HCT116 (cell line): ENCODE measurements at regions of chr10 and their contacts with region 1.

Region 1: GRCh38 chr10:103542764-103543616 is 49.5 kb downstream of the NEURL1 start:
- DNase-seq: peak; percentile 46
- ATAC-seq: peak; percentile 81
- H3K4me3 ChIP-seq: peak overlapping the region; percentile 29 to 39
- H3K27ac ChIP-seq: no peak overlapping the region
- H3K4me1 ChIP-seq: peaks cover 8 to 35% of the 10 kb centered on the region in 2 experiments; a peak in 3 of 4 replicates
- H3K27me3 ChIP-seq: no peaks in the 10 kb centered on the region
- CTCF ChIP-seq: peak; percentile 76 to 84 (median 84)
- POLR2A ChIP-seq: no peak
- RAD21 ChIP-seq: no peak

Region 2: GRCh38 chr10:103416436-103417147 is 126.4 kb before region 1 on chr10:
- CTCF ChIA-PET with region 1: no interaction called
- POLR2A ChIA-PET with region 1: no interaction called
- RAD21 ChIA-PET with region 1: no interaction called
- intact Hi-C with region 1: loop called (anchors 1 kb)
- DNase-seq: peak; percentile 58
- ATAC-seq: peak; percentile 80
- H3K4me3 ChIP-seq: no peak overlapping the region
- H3K27ac ChIP-seq: no peak overlapping the region
- H3K4me1 ChIP-seq: no peaks in the 10 kb centered on the region
- H3K27me3 ChIP-seq: no peaks in the 10 kb centered on the region
- CTCF ChIP-seq: peak; percentile 57 to 93 (median 77)
- POLR2A ChIP-seq: no peak
- RAD21 ChIP-seq: peak; percentile 92

Region 3: GRCh38 chr10:103491493-103492381 is 51.3 kb before region 1 on chr10:
- CTCF ChIA-PET with region 1: interaction called, 8 read pairs
- POLR2A ChIA-PET with region 1: no interaction called
- RAD21 ChIA-PET with region 1: no interaction called
- intact Hi-C with region 1: loop called (anchors 2 kb)
- DNase-seq: peak; percentile 44
- ATAC-seq: peak; percentile 85
- H3K4me3 ChIP-seq: no peak overlapping the region
- H3K27ac ChIP-seq: no peak overlapping the region
- H3K4me1 ChIP-seq: peaks cover 15 to 28% of the 10 kb centered on the region in 2 experiments
- H3K27me3 ChIP-seq: no peaks in the 10 kb centered on the region
- CTCF ChIP-seq: no peak
- POLR2A ChIP-seq: no peak
- RAD21 ChIP-seq: no peak

Region 4: DNA sequence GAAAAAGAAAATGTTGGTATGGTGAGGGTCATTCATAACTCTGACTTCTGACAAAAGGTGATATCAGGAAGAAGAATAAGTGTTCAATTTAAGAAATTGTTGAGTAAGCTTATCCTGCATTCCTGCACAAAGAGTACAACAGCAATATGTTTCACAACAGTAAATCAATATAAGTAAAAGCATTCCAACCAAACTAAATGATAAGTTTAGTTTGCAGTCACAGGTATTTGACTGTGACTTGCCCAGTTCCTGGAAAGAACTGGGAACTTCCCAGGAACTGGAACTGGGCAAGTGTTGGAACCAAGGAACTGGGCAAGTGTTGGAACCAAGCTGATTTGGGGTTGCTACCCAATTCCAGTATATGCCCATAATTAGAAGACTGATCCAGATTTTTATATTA is 14.4 kb before region 1 on chr10:
- CTCF ChIA-PET with region 1: interaction called, 14 read pairs
- POLR2A ChIA-PET with region 1: interaction called, 12 read pairs
- RAD21 ChIA-PET with region 1: no interaction called
- intact Hi-C with region 1: no loop called
- DNase-seq: no peak
- ATAC-seq: no peak
- H3K4me3 ChIP-seq: no peak overlapping the region
- H3K27ac ChIP-seq: no peak overlapping the region
- H3K4me1 ChIP-seq: peaks cover 10 to 45% of the 10 kb centered on the region in 2 experiments
- H3K27me3 ChIP-seq: no peaks in the 10 kb centered on the region
- CTCF ChIP-seq: no peak
- POLR2A ChIP-seq: no peak
- RAD21 ChIP-seq: no peak

Region 5: GRCh38 chr10:103564776-103565520 is 22.0 kb after region 1 on chr10:
- CTCF ChIA-PET with region 1: interaction called, 19 read pairs
- POLR2A ChIA-PET with region 1: no interaction called
- RAD21 ChIA-PET with region 1: no interaction called
- intact Hi-C with region 1: no loop called
- DNase-seq: peak; percentile 42
- ATAC-seq: peak; percentile 97
- H3K4me3 ChIP-seq: no peak overlapping the region
- H3K27ac ChIP-seq: no peak overlapping the region
- H3K4me1 ChIP-seq: peaks cover 0 to 15% of the 10 kb centered on the region in 2 experiments; a peak in 1 of 4 replicates
- H3K27me3 ChIP-seq: peaks cover 4% of the 10 kb centered on the region; the same call in 1 of the 2 replicates
- CTCF ChIP-seq: peak; percentile 79 to 100 (median 99); a peak in 5 of 6 replicates
- POLR2A ChIP-seq: no peak
- RAD21 ChIP-seq: peak; percentile 91

Region 6: DNA sequence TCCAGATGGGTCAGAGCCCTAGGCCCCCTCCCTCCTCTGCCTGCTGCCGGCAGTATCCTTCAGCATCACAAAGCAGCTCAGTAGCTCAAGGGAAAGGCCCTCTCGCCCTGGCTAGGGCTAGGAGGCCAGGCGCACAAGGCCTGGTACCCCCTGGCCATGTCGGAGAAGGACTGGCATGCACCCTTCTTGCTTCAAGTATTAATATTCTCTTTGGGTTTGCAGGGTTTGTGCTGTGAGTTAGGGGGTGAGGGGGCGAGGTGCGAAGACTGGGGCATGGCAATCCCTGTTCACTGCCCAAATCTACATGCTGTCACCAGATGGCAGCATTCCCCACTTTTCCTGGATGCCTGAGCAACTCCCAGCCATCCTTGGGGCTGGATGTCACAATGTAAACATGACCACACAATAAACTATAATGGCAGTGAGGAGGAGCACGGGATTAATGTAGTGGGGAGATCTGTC is 55.7 kb after region 1 on chr10:
- CTCF ChIA-PET with region 1: no interaction called
- POLR2A ChIA-PET with region 1: no interaction called
- RAD21 ChIA-PET with region 1: no interaction called
- intact Hi-C with region 1: no loop called
- DNase-seq: peak; percentile 66
- ATAC-seq: peak; percentile 97
- H3K4me3 ChIP-seq: no peak overlapping the region
- H3K27ac ChIP-seq: no peak overlapping the region
- H3K4me1 ChIP-seq: peaks cover 0 to 5% of the 10 kb centered on the region in 2 experiments; a peak in 2 of 4 replicates
- H3K27me3 ChIP-seq: no peaks in the 10 kb centered on the region
- CTCF ChIP-seq: peak; percentile 93 to 98 (median 95)
- POLR2A ChIP-seq: no peak
- RAD21 ChIP-seq: peak; percentile 98

Region 7: GRCh38 chr10:103645141-103646054 is 102.4 kb after region 1 on chr10:
- CTCF ChIA-PET with region 1: no interaction called
- POLR2A ChIA-PET with region 1: no interaction called
- RAD21 ChIA-PET with region 1: no interaction called
- intact Hi-C with region 1: no loop called
- DNase-seq: no peak
- ATAC-seq: no peak
- H3K4me3 ChIP-seq: no peak overlapping the region
- H3K27ac ChIP-seq: no peak overlapping the region
- H3K4me1 ChIP-seq: peaks cover 3 to 9% of the 10 kb centered on the region in 2 experiments; a peak in 3 of 4 replicates
- H3K27me3 ChIP-seq: no peaks in the 10 kb centered on the region
- CTCF ChIP-seq: no peak
- POLR2A ChIP-seq: no peak
- RAD21 ChIP-seq: no peak

Region 8: DNA sequence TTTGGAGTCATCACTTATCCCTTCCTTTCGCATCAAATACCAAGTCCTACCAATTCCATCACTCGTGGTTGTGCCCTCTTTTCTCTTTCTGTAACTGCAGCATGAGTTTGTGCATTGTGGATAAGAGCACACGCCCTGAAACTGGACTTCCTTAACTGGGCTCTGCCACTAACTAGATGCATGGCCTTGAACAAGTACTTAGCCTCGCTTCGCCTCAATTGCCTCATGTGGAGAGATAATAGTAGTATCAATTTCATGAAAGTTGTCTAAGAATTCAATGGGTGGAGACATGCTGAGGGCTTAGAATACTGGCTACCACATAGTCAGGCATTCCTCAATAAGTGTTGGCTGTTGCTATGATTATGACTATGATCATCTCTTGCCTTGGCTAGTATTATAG is 647.7 kb after region 1 on chr10:
- CTCF ChIA-PET with region 1: no interaction called
- POLR2A ChIA-PET with region 1: no interaction called
- RAD21 ChIA-PET with region 1: no interaction called
- intact Hi-C with region 1: no loop called
- DNase-seq: no peak
- ATAC-seq: no peak
- H3K4me3 ChIP-seq: no peak overlapping the region
- H3K27ac ChIP-seq: no peak overlapping the region
- H3K4me1 ChIP-seq: no peaks in the 10 kb centered on the region
- H3K27me3 ChIP-seq: no peaks in the 10 kb centered on the region
- CTCF ChIP-seq: no peak
- POLR2A ChIP-seq: no peak
- RAD21 ChIP-seq: no peak